Gastrocnemius medialis (tissue), 4 donors: ENCODE measurements at regions of chr17 and their contacts with region 1.

Region 1: DNA sequence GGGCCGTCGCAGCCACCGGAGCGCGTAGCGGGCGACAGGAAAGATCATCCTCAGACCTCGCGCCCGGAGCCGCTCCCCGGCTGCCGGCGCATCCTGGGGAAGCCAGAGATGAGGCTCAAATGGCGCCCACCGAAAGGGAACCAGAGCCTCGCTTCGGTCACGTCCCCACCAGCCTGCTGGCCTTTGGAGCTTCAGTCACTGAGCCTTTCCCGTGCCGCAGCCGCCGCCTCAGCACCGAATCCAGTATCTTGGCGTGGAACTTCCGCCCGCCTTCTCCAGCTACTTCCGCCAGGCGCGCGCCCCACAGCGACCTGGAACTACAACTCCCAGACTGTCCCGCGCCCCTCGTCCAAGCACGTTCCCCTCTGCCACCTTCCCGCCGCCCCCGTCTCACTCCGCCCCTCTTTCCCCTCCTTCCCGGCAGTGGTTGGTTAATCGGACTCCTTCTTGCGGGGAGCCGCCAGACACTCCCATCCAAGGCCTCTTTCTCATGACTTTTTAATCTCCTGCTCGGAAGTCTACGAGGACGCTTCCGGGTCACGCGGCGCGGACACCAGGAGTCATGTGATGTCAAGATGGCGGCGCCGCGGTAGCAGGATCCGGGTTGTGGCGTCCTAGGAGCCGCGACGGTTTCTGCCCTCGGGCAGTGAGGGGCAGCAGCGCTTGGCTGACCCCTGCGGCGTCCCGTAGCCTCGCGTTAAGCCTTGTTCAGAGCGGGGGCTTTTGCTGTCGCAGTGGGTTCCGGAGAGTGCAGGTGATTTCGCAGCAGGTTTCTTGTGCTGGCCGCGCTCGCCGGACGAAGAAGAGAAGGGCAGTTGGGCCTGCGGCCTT is at the starts of genes SMCR8 and TOP3A:
- DNase-seq: peak; percentile 97
- ATAC-seq: peak; percentile 94 to 96
- H3K4me3 ChIP-seq: peak within 1 kb of the TSS; percentile 79 to 94 (median 88)
- H3K27ac ChIP-seq: peak within 1 kb of the TSS; percentile 90 to 96 (median 93)
- H3K4me1 ChIP-seq: peaks cover 59 to 60% of the 10 kb centered on the region in 2 donors
- H3K27me3 ChIP-seq: no peaks in the 10 kb centered on the region
- CTCF ChIP-seq: peak in 2 of 5 experiments; percentile 7 to 30
- POLR2A ChIP-seq: peak; percentile 57 to 59
- total RNA-seq, gene SMCR8: 9.2 to 15.7 (median 12.4) TPM
- total RNA-seq, gene TOP3A: 17.7 to 62.4 (median 22.1) TPM

Region 2: GRCh38 chr17:17972126-17972951 is 342.6 kb before region 1 on chr17 and contains the starts of genes DRC3 and TOM1L2:
- in situ Hi-C with region 1: no loop called
- intact Hi-C with region 1: loop called (anchors 10 kb)
- DNase-seq: peak; percentile 100
- ATAC-seq: peak; percentile 98
- H3K4me3 ChIP-seq: peak within 1 kb of the TSS; percentile 76 to 95 (median 90)
- H3K27ac ChIP-seq: peak within 1 kb of the TSS; percentile 87 to 97 (median 97)
- H3K4me1 ChIP-seq: peaks cover 23 to 27% of the 10 kb centered on the region in 2 donors
- H3K27me3 ChIP-seq: no peaks in the 10 kb centered on the region
- CTCF ChIP-seq: peak; percentile 10 to 57 (median 25)
- POLR2A ChIP-seq: peak; percentile 96 to 98
- total RNA-seq, gene DRC3: 0.05 to 0.81 (median 0.28) TPM
- total RNA-seq, gene TOM1L2: 55.7 to 97.1 (median 73.3) TPM

Region 3: GRCh38 chr17:18225121-18225566 is 89.8 kb before region 1 on chr17:
- in situ Hi-C with region 1: loop called in 2 of 4 experiments (anchors 5 to 10 kb)
- intact Hi-C with region 1: loop called (anchors 1 kb)
- DNase-seq: peak; percentile 93 to 95
- ATAC-seq: peak; percentile 91
- H3K4me3 ChIP-seq: peak overlapping the region; percentile 50 to 67 (median 59)
- H3K27ac ChIP-seq: peak overlapping the region; percentile 65 to 72 (median 71)
- H3K4me1 ChIP-seq: peaks cover 16 to 17% of the 10 kb centered on the region in 2 donors
- H3K27me3 ChIP-seq: no peaks in the 10 kb centered on the region
- CTCF ChIP-seq: no peak
- POLR2A ChIP-seq: no peak

Region 4: DNA sequence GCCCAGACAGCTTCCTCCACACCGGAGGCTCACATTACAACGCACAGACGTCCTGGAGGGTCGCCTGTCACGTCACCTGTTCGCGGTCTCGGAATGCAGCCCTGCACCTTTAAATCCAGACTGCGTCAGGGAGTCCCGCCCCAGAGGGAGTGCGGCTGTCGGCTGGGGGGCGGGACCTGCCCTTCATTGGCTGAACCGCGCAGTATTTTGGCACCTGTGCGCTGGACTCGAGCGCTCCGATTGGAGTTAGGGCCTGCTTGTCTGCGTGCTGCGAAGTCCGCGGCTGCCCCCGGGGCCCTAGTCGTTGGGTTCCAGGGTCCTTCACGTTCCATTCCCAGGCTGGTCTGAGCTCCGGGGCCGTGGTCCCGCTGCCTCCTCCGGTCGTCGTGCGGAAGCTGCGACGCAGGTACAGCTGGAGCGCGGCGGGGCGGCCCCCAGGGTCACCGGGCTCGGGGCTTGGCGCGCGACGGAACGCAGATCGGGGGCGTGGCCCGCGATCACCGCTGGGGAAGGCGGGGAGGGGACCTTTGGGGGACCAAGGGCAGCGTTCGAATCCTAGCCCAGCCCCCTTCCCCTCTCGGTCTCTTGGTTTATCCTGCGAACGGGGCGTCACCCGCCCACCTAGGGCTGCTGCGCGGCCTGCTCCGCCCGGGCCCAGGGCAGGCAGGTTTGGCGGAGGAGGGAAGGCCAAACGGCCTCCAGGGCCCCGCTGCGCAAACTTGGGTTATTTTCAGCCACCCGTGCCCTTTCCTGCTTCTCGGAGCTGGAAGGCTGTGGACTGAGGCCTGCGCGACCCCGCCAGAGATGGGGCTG is 54.4 kb before region 1 on chr17 and contains the start of gene MIEF2:
- in situ Hi-C with region 1: loop called in 1 of 4 experiments (anchors 10 kb)
- intact Hi-C with region 1: loop called (anchors 2 kb)
- DNase-seq: peak; percentile 96 to 97
- ATAC-seq: peak; percentile 66 to 75
- H3K4me3 ChIP-seq: peak within 1 kb of the TSS; percentile 90 to 94 (median 90)
- H3K27ac ChIP-seq: peak within 1 kb of the TSS; percentile 98 to 100 (median 99)
- H3K4me1 ChIP-seq: peaks cover 58 to 61% of the 10 kb centered on the region in 2 donors
- H3K27me3 ChIP-seq: no peaks in the 10 kb centered on the region
- CTCF ChIP-seq: peak in 1 of 5 experiments; percentile 9
- POLR2A ChIP-seq: peak; percentile 78 to 79
- total RNA-seq, gene MIEF2: 19.3 to 45.2 (median 34.3) TPM

Region 5: DNA sequence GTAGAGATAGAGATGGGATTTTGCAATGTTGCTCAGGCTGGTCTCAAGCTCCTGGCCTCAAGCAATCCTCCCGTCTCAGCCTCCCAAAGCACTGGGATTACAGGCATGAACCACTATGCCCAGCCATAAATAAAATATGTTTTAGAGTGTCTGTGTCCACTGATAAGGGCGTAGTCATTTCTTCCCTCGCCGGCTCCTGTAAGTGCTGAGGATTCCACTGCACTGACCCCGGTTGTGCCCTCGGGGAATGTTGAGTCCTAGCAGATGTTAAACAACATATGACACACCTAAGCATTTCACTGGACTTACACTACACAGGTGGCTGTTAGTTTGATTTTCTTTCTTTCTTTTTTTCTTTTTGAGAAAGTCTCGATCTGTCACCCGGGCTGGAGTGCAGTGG is 54.0 kb after region 1 on chr17:
- in situ Hi-C with region 1: no loop called
- intact Hi-C with region 1: no loop called
- DNase-seq: no peak
- ATAC-seq: no peak
- H3K4me3 ChIP-seq: no peak overlapping the region
- H3K27ac ChIP-seq: no peak overlapping the region
- H3K4me1 ChIP-seq: peaks cover 0 to under 1% of the 10 kb centered on the region in 2 donors
- H3K27me3 ChIP-seq: no peaks in the 10 kb centered on the region
- CTCF ChIP-seq: no peak
- POLR2A ChIP-seq: no peak